ENCODE measurements at regions of chr15 and their contacts with region 1.

Region 1: DNA sequence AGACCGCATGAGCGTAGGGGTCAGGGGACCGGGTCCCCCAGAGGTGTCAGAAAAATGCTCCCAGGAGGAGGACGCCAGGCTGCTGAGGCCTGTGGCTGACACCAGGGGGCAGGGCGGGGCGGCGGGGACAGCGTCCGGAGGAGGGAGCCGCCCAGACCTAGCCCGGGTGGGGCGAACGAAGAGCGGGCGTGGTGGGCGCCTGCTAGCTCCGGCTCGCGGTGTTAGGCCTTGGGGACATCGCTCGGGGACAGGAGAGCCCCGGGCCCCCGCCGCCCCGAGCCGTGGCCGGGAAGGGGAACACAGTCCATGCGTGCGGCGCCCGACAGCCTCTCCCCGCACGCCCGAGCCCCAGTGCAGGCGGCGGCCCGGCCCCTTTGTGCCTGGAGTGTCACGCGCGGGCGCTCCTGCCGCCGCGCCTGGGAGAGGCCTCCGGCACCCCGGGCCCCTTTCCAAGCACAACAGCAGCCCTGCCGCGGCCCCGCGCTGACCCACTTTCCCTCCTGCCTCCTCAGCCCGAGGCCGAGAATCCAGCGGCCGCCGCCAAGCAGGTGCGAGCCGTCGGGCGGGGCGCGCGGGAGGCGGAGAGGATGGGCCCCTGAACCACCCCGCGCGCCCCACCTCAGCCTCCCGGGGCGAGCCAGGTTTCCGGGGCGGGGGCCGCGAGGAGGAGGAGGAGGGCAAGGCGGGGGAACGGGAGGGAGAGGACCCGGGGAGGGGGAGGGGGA is 111.0 kb upstream of the KLF13 start:
- DNase-seq: peak; percentile 90
- H3K4me3 ChIP-seq: peak overlapping the region; percentile 45
- H3K27ac ChIP-seq: peak overlapping the region; percentile 94
- H3K4me1 ChIP-seq: peaks cover 11% of the 10 kb centered on the region
- H3K27me3 ChIP-seq: no peaks in the 10 kb centered on the region
- CTCF ChIP-seq: peak; percentile 85

Region 2: GRCh38 chr15:31338879-31339557 is 123.4 kb after region 1 on chr15:
- intact Hi-C with region 1: no loop called
- DNase-seq: no peak
- H3K4me3 ChIP-seq: no peak overlapping the region
- H3K27ac ChIP-seq: peak overlapping the region; percentile 43
- H3K4me1 ChIP-seq: peaks cover 53% of the 10 kb centered on the region
- H3K27me3 ChIP-seq: no peaks in the 10 kb centered on the region
- CTCF ChIP-seq: no peak

Region 3: GRCh38 chr15:31365655-31366127 is 150.0 kb after region 1 on chr15:
- intact Hi-C with region 1: loop called (anchors 10 kb)
- DNase-seq: peak; percentile 90
- H3K4me3 ChIP-seq: peak overlapping the region; percentile 12
- H3K27ac ChIP-seq: peak overlapping the region; percentile 60
- H3K4me1 ChIP-seq: peaks cover 43% of the 10 kb centered on the region
- H3K27me3 ChIP-seq: no peaks in the 10 kb centered on the region
- CTCF ChIP-seq: peak; percentile 33